WTC11 (cell line): ENCODE measurements at regions of chr6 and their contacts with region 1.

Region 1: DNA sequence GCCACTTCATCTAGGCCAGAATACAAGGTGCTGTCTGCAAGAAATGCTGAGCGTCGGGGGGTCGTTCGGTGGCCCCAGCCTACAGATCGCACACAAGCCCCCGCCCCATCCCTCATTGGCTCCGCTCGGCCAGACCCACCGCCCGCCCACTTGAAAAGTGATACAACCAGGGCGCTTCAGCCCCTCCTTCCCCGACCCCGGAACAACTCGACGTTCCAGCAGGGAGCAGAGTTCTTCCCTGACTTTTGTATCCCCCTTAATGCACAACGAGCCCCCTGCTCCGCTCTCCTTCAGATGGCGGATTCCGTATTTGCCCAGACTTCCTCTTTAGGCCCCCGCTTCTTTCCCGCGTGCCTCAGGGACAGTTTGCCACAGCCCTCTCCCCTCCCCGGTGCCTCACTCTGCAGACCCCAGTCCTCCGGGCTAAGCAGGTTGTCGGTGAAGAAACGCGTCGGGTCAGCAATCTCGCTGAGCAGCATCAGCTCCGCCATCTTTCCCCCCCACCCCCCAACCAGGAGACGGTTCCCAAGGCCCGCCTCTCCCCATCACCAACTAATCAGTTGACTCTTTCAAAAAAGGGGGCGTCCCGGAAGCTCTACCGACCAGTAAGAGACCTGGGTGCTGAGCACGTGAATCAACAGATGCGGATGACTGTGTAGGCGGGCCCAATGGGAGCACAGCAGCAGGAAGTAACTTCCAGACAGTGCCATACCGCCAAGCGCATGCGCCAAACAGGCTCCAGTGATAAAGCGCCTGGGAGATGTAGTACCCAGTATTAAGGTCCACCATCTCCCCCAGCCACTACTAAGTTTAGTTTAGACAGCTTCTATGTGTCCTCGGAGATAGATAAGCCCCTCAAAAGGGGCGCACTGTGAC is at the start of gene ATF6B:
- DNase-seq: peak; percentile 96
- ATAC-seq: peak; percentile 93
- H3K4me3 Mint-ChIP-seq: peak within 1 kb of the TSS; percentile 99
- H3K27ac Mint-ChIP-seq: peak within 1 kb of the TSS; percentile 99
- H3K4me1 Mint-ChIP-seq: peaks cover 23% of the 10 kb centered on the region
- H3K27me3 Mint-ChIP-seq: no peaks in the 10 kb centered on the region
- CTCF ChIP-seq: no peak
- total RNA-seq, gene ATF6B: 46.1 to 49.1 TPM (median 47.5 TPM) in 3 replicates

Region 2: DNA sequence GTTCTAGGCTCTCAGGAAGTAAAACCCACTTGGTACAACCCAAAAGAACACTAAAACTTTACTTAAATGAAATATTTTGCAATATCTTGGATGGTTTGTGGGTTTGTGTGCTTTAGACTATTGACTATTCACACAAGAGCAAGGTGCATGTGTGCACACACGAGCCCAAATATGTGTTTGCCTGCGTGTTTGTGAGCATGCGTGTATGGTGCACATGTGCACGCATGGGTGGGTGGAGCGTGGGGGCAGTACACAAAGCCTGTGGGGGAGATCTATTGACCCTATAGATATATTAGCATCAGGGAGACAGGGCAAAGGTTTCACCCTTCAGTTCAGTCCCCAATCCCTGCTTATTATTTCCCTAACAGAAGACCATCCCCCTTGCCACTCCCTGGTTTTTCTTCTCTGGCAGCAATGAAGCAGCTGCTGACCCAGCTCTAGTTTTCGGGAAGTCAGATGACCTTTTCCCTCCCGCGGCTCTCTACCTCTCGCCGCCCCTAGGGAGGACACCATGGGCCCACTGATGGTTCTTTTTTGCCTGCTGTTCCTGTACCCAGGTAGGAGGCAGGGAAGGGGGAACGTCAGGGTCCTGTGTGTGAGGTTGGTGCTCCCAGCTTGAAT is 200.6 kb before region 1 on chr6 and contains the start of gene C2:
- CTCF ChIA-PET with region 1: no interaction called
- POLR2A ChIA-PET with region 1: no interaction called
- DNase-seq: no peak
- ATAC-seq: no peak
- H3K4me3 Mint-ChIP-seq: no peak within 1 kb of the TSS
- H3K27ac Mint-ChIP-seq: no peak within 1 kb of the TSS
- H3K4me1 Mint-ChIP-seq: no peaks in the 10 kb centered on the region
- H3K27me3 Mint-ChIP-seq: peaks cover 17% of the 10 kb centered on the region
- CTCF ChIP-seq: no peak
- total RNA-seq, gene C2: 1.3 TPM in 3 replicates

Region 3: GRCh38 chr6:32148289-32149091 is 20.5 kb after region 1 on chr6:
- CTCF ChIA-PET with region 1: interaction called, 38 read pairs
- POLR2A ChIA-PET with region 1: interaction called, 7 read pairs
- DNase-seq: peak; percentile 96
- ATAC-seq: peak; percentile 74
- H3K4me3 Mint-ChIP-seq: peak overlapping the region; percentile 95
- H3K27ac Mint-ChIP-seq: peak overlapping the region; percentile 12
- H3K4me1 Mint-ChIP-seq: peaks cover 51% of the 10 kb centered on the region
- H3K27me3 Mint-ChIP-seq: peaks cover 65% of the 10 kb centered on the region
- CTCF ChIP-seq: peak; percentile 46; the same call in 1 of the 2 replicates

Region 4: GRCh38 chr6:32153564-32154513 is 25.9 kb after region 1 on chr6 and contains the start of gene PPT2:
- CTCF ChIA-PET with region 1: interaction called, 38 read pairs
- POLR2A ChIA-PET with region 1: interaction called, 7 read pairs
- DNase-seq: peak; percentile 89
- ATAC-seq: peak; percentile 54
- H3K4me3 Mint-ChIP-seq: peak within 1 kb of the TSS; percentile 100
- H3K27ac Mint-ChIP-seq: peak within 1 kb of the TSS; percentile 99
- H3K4me1 Mint-ChIP-seq: peaks cover 35% of the 10 kb centered on the region
- H3K27me3 Mint-ChIP-seq: peaks cover 39% of the 10 kb centered on the region
- CTCF ChIP-seq: no peak
- total RNA-seq, gene PPT2: 30.0 to 33.8 TPM (median 31.6 TPM) in 3 replicates